Sciatic nerve (tissue), 2 donors: ENCODE measurements at regions of chr14 and their contacts with region 1.

Region 1: GRCh38 chr14:65412032-65412846 is at the start of gene FUT8:
- DNase-seq: peak; percentile 97
- ATAC-seq: peak; percentile 95
- total RNA-seq, gene FUT8: 149 TPM

Region 2: DNA sequence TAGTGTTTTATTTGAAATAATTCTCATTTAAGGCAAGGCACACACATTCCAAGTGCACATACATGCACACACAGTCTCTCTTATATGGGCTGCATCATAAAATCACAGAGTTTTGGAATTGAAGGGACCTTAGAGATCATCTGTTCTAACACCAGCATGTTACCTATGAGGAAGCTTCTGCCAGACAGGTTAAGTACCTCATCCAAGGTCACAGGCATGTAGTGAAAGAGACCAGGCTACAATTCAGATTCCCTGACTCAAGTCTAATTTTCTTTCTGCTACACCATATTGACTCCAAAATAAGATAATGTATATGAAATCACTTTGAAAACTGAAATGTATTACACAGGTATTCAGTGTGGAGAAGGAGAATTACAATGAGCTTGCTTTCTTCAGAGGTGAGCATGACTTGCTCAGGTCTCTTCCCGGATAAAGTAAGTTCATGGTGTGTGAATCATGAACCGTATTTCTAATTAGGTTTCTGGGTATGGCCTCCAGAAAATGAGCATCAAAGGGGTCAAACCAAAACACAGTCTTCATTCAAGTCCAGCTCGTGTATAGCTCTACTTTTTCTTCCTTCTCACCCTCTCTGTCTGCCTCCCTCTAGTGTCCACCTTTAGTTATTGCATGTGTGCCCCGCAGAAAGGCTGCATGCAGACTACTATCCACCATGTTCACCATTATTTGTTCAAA is 412.2 kb after region 1 on chr14:
- intact Hi-C with region 1: loop called (anchors 10 kb)
- DNase-seq: peak; percentile 67
- ATAC-seq: peak; percentile 86

Region 3: GRCh38 chr14:66842911-66843512 is 1430.8 kb after region 1 on chr14:
- intact Hi-C with region 1: no loop called
- DNase-seq: no peak
- ATAC-seq: no peak